IMR-90 (cell line): ENCODE measurements at regions of chr7 and their contacts with region 1.

Region 1: GRCh38 chr7:117750612-117751563 is 122.4 kb downstream of the CTTNBP2 start:
- DNase-seq: peak; percentile 50
- ATAC-seq: peak; percentile 75
- H3K4me3 ChIP-seq: no peak overlapping the region
- H3K27ac ChIP-seq: no peak overlapping the region
- H3K4me1 ChIP-seq: 0 out of 2 replicates have a peak, but pooled peaks cover 2% of the 10 kb centered on the region
- H3K27me3 ChIP-seq: no peaks in the 10 kb centered on the region
- CTCF ChIP-seq: peak; percentile 70
- POLR2A ChIP-seq: no peak
- RAD21 ChIP-seq: peak; percentile 77

Region 2: GRCh38 chr7:117706191-117706590 is 44.7 kb before region 1 on chr7:
- CTCF ChIA-PET with region 1: no interaction called
- POLR2A ChIA-PET with region 1: no interaction called
- dilution Hi-C with region 1: no loop called
- in situ Hi-C with region 1: no loop called
- intact Hi-C with region 1: no loop called
- DNase-seq: no peak
- ATAC-seq: no peak
- H3K4me3 ChIP-seq: no peak overlapping the region
- H3K27ac ChIP-seq: no peak overlapping the region
- H3K4me1 ChIP-seq: no peaks in the 10 kb centered on the region
- H3K27me3 ChIP-seq: no peaks in the 10 kb centered on the region
- CTCF ChIP-seq: no peak
- POLR2A ChIP-seq: no peak
- RAD21 ChIP-seq: no peak

Region 3: DNA sequence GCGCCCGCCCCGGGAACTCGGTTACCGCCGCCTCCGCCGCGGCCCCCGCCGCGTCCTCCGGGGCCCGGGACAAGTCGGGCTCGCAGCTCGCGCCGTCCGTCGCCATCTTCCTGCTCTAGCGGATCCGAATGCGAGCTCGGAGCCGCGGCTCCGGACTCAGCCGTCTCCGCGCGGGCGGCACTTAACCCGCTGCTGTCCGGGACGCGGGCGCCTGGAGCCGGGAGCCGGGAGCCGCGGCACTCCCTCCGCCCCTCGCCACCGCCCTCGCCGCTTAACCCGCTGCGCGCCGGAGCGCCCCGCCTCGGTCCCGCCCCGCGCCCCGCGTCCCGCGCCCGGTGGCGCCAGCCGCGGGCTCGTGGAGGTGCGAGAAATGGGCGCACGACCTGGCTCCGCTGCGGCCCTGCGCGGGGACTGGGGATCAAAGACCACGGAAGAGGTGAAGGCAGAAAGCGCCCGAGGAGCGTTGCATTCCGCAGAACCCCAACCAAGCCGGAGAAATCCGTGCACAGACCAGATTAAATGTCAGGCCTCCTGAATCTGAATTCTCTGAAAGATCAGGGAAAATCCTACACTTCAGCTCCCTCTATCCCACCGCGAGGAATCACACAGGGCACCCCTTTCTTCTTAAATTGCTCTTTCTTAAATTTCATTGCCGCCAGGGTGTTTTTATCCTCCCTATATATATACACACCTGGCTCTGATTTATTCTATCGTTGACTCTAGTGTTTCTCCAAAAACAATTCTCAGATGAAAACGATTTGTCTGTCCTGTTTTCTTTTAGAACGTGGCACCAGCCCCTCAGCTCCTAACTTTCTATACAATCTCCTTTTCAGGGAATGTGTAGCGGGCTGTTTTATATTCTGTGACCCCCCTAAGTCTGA is 122.7 kb after region 1 on chr7 and contains the start of gene CTTNBP2:
- CTCF ChIA-PET with region 1: interaction called, 3 read pairs
- POLR2A ChIA-PET with region 1: no interaction called
- dilution Hi-C with region 1: no loop called
- in situ Hi-C with region 1: no loop called
- intact Hi-C with region 1: loop called (anchors 1 kb)
- DNase-seq: peak; percentile 59
- ATAC-seq: peak; percentile 83
- H3K4me3 ChIP-seq: peak within 1 kb of the TSS; percentile 68
- H3K27ac ChIP-seq: peak within 1 kb of the TSS; percentile 42
- H3K4me1 ChIP-seq: no peaks in the 10 kb centered on the region
- H3K27me3 ChIP-seq: peaks cover 1% of the 10 kb centered on the region; the same call in 1 of the 2 replicates
- CTCF ChIP-seq: 0 out of 2 replicates have a peak, but pooled peaks have one; percentile 11
- POLR2A ChIP-seq: no peak
- RAD21 ChIP-seq: peak; percentile 35; the same call in 1 of the 2 replicates
- total RNA-seq, gene CTTNBP2: 11.3 and 11.4 TPM in 2 replicates

Region 4: GRCh38 chr7:117993377-117994003 is 242.6 kb after region 1 on chr7:
- CTCF ChIA-PET with region 1: no interaction called
- POLR2A ChIA-PET with region 1: no interaction called
- dilution Hi-C with region 1: no loop called
- in situ Hi-C with region 1: no loop called
- intact Hi-C with region 1: loop called (anchors 10 kb)
- DNase-seq: peak; percentile 39
- ATAC-seq: peak; percentile 85
- H3K4me3 ChIP-seq: no peak overlapping the region
- H3K27ac ChIP-seq: no peak overlapping the region
- H3K4me1 ChIP-seq: no peaks in the 10 kb centered on the region
- H3K27me3 ChIP-seq: no peaks in the 10 kb centered on the region
- CTCF ChIP-seq: peak; percentile 32
- POLR2A ChIP-seq: no peak
- RAD21 ChIP-seq: no peak

Region 5: GRCh38 chr7:118080947-118081346 is 330.1 kb after region 1 on chr7:
- CTCF ChIA-PET with region 1: no interaction called
- POLR2A ChIA-PET with region 1: no interaction called
- dilution Hi-C with region 1: no loop called
- in situ Hi-C with region 1: loop called (anchors 25 kb)
- intact Hi-C with region 1: no loop called
- DNase-seq: peak; percentile 81
- ATAC-seq: peak; percentile 65
- H3K4me3 ChIP-seq: no peak overlapping the region
- H3K27ac ChIP-seq: no peak overlapping the region
- H3K4me1 ChIP-seq: no peaks in the 10 kb centered on the region
- H3K27me3 ChIP-seq: no peaks in the 10 kb centered on the region
- CTCF ChIP-seq: no peak
- POLR2A ChIP-seq: no peak
- RAD21 ChIP-seq: no peak

Region 6: DNA sequence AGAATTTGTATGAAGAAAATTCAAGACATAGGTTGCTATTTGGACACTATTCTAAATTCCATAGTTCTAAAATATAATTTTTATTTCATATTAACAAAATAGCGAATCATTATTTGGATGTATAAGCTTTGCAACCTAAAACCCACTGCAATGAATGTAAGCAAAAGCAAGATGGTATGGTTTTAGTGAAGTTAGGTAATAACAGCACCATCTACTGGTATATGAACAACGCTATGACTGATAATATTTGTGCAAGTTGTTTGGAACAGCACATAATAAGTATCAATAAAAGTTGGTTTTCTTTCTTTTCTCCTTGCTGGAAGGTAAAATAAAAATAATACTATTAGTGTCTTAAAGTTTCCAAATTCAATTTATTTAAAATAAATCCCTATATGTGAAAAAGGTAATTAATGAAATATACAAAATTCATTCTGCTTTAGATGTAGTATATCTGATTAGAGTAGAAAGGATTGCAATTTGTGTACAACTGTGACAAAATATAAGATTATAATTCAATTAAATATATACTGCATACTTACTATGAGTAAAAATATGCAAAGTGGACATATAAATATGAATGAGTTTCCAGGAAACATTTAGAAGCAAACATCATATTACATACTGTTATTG is 354.0 kb after region 1 on chr7:
- CTCF ChIA-PET with region 1: no interaction called
- POLR2A ChIA-PET with region 1: no interaction called
- dilution Hi-C with region 1: no loop called
- in situ Hi-C with region 1: no loop called
- intact Hi-C with region 1: loop called (anchors 1 kb)
- DNase-seq: peak; percentile 40
- ATAC-seq: peak; percentile 61
- H3K4me3 ChIP-seq: no peak overlapping the region
- H3K27ac ChIP-seq: no peak overlapping the region
- H3K4me1 ChIP-seq: no peaks in the 10 kb centered on the region
- H3K27me3 ChIP-seq: no peaks in the 10 kb centered on the region
- CTCF ChIP-seq: peak; percentile 58
- POLR2A ChIP-seq: no peak
- RAD21 ChIP-seq: peak; percentile 49

Region 7: DNA sequence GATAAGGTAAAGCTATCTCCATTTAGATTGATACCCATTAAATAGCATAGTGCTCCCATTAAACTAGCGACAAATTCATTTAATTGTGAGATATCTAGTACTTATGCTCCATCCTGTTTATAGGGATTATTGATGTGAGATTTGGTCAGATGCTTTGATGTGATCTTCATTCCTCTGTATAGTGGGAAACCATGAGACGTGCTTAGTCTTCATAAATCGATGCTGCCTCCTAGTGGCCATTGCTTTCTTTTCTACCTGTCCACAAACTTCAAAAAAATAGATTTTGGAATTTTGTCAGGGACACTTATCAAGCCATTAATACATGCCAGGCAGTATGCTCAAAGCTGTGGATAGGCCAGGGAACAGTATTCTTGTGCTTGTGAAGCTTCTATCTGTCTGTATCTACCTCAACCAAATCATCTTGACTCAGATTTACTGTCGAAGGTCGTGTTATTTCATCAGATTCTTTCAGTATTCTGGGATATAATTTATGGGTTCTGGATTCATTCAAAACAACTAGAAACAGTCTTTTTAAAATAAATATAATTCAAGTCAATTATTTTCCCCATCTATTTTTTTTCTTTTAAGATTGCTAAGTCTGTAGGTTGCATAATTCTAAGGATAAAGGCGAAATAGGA is 445.1 kb after region 1 on chr7:
- CTCF ChIA-PET with region 1: interaction called, 3 read pairs
- POLR2A ChIA-PET with region 1: no interaction called
- dilution Hi-C with region 1: no loop called
- in situ Hi-C with region 1: loop called (anchors 10 kb)
- intact Hi-C with region 1: loop called (anchors 5 kb)
- DNase-seq: peak; percentile 70
- ATAC-seq: peak; percentile 88
- H3K4me3 ChIP-seq: no peak overlapping the region
- H3K27ac ChIP-seq: no peak overlapping the region
- H3K4me1 ChIP-seq: no peaks in the 10 kb centered on the region
- H3K27me3 ChIP-seq: no peaks in the 10 kb centered on the region
- CTCF ChIP-seq: peak; percentile 72
- POLR2A ChIP-seq: no peak
- RAD21 ChIP-seq: peak; percentile 59